Activated CD4-positive, alpha-beta memory T cell treated with anti-CD3 and anti-CD28 coated beads, Interleukin-2, amount 10 ng/mL, durations not matched to agents 7 days and 5 days (primary cell): ENCODE measurements at regions of chr20 and their contacts with region 1.

Region 1: DNA sequence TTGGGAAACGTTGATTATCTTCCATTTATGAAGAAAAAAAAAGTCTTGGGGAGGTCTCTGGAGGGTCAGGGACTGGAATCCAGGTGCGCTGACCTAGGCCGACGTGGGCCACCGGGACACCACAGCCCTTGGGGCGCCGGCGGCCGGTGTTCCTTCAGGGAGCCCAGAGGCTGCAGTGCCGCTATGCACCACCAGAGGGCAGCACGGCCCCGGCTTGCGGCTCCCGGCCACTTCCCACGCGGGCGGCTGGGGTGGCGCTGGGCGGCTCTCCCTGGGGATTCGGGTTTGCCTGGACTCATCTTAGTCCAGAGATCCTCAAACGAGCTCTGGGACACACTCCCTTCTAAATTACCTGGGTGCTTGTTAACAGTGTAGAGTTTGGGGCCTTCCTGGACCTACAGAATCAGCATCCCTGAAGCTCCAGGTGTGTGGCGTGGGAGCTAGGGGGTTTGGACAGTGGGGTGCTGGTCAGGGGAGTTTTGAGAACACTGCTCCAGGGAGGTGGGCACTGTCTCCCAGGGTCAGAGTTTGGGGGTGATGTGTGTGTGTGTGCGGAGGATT is 23.0 kb upstream of the GTSF1L start:
- DNase-seq: peak; percentile 81
- H3K4me3 Mint-ChIP-seq: no peak overlapping the region
- H3K27ac Mint-ChIP-seq: peak overlapping the region; percentile 41
- H3K4me1 Mint-ChIP-seq: peaks cover 46% of the 10 kb centered on the region
- H3K27me3 Mint-ChIP-seq: peaks cover 14% of the 10 kb centered on the region

Region 2: DNA sequence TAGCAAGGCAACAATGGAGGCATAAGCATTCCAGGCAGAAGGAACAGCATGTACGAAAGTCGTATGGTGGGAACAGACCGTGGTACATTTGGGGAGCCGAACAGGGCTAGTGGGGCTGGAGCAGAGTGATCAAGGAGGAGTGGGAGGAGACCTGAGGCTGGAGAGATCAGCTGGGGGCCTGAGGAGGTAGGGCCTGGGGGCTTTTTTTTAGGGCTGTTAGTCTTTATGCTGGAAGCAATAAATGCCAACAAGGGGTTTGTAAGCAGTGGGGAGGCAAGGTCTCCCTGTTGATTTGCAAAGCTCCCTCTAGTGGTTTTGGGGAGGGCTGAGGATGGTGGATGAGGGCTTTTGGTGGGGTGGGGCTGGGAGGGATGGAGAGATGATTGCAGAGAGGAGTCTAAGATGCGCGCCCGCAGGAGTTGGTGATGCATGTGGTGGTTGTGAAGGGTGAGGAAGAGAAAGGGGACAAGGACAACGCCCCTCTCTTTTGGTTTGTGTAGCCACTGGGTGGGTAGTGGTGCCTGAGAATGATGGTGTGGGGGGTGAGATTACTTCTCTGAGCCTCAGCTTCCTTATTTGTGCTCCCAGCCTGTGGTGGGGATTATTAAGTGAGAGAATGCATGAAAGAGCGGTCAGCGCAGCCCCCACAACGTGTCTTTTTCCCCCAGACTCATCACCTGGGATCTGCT is 90.7 kb after region 1 on chr20:
- CTCF ChIA-PET with region 1: interaction called, 56 read pairs
- POLR2A ChIA-PET with region 1: interaction called, 26 read pairs
- DNase-seq: peak; percentile 55
- H3K4me3 Mint-ChIP-seq: no peak overlapping the region
- H3K27ac Mint-ChIP-seq: peak overlapping the region; percentile 55
- H3K4me1 Mint-ChIP-seq: peaks cover 59% of the 10 kb centered on the region
- H3K27me3 Mint-ChIP-seq: peaks cover 23% of the 10 kb centered on the region

Region 3: DNA sequence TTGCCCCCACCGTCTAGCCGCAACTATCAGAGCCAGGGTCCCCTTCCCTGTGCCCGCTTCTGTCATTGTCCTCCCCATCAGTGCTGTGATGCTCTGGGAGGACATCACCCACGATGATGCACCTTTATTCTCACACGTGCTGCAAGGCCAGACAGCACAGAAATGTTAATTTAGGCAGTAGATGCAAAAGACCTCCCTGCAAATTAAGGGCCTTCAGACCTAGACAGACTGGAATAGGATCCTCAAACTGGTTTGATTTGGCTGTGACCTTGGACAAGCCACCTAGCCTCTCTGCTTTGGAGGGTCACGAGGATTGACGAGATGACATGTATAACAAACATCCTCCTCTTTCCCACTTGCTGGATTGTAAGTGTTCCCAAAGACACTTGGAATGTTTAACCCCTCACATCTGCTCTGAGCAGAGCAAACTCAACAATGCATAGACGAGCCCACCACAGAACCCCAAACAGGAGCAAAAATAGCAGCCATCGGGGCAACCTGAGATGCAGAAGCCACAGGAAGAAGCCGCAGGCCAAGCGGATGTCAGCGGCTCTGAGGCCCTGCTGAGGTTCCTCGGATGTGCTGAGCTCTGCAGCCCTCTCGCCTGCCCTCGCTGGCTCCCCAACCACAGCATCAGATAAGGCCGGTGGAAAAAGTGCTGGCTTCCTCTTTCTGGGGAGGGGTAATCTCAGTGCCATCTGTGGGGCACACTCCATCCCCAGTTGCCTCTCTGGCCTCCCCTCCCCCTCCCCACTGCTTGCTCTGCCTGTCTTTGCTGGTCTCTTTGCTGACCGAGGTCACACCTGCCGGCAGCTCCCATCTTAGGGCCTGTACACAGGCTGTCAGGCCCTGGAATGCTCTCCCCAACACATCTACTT is 200.2 kb after region 1 on chr20:
- CTCF ChIA-PET with region 1: interaction called, 3 read pairs
- POLR2A ChIA-PET with region 1: interaction called, 13 read pairs
- DNase-seq: peak; percentile 93
- H3K4me3 Mint-ChIP-seq: peak overlapping the region; percentile 25
- H3K27ac Mint-ChIP-seq: peak overlapping the region; percentile 41
- H3K4me1 Mint-ChIP-seq: peaks cover 70% of the 10 kb centered on the region
- H3K27me3 Mint-ChIP-seq: peaks cover 76% of the 10 kb centered on the region

Region 4: GRCh38 chr20:44018259-44018941 is 268.6 kb after region 1 on chr20:
- CTCF ChIA-PET with region 1: interaction called, 12 read pairs
- POLR2A ChIA-PET with region 1: interaction called, 9 read pairs
- DNase-seq: no peak
- H3K4me3 Mint-ChIP-seq: no peak overlapping the region
- H3K27ac Mint-ChIP-seq: no peak overlapping the region
- H3K4me1 Mint-ChIP-seq: peaks cover 25% of the 10 kb centered on the region
- H3K27me3 Mint-ChIP-seq: peaks cover 84% of the 10 kb centered on the region

Region 5: GRCh38 chr20:44080646-44081267 is 330.9 kb after region 1 on chr20:
- CTCF ChIA-PET with region 1: interaction called, 109 read pairs
- POLR2A ChIA-PET with region 1: interaction called, 5 read pairs
- DNase-seq: peak; percentile 81
- H3K4me3 Mint-ChIP-seq: no peak overlapping the region
- H3K27ac Mint-ChIP-seq: no peak overlapping the region
- H3K4me1 Mint-ChIP-seq: peaks cover 6% of the 10 kb centered on the region
- H3K27me3 Mint-ChIP-seq: peaks cover 16% of the 10 kb centered on the region